Activated naive CD4-positive, alpha-beta T cell treated with anti-CD3 and anti-CD28 coated beads for 36 hours (primary cell): ENCODE measurements at regions of chr5 and their contacts with region 1.

Region 1: DNA sequence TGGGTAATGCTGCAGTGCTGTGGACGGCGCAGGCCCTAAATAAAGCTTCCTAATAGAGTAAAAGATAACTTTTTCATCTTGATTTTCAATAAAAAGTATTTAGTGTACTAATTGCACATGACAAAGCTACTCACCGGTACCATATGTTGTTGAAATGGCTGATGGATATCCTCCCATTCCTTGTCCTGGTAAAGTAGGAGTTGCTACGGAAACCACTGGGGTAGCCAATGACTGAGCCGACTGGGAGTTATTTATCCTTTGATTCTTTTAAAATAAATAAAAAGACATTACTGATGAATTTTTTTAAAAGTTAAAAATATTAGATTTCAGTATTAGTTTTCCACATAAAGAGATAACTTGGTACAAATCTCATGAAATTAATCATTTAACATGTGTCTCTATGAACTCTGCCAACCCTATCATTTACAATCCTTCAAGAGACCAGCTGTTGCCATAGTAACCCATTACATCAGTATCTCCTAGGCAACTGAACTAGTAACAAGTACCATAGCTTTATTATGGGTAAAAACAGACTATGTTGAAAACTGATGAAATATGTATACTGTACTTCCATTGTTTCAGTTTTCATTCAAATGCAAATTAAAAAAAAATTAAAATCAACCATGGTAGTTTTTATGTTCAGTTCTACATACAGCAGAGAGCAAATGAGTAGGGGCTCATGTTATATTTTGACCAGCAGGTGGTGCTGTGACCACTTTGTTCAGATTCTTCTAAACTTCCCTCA is 153.7 kb downstream of the MEF2C start:
- DNase-seq: peak; percentile 76
- H3K4me3 Mint-ChIP-seq: no peak overlapping the region
- H3K27ac Mint-ChIP-seq: no peak overlapping the region
- H3K4me1 Mint-ChIP-seq: peaks cover 4% of the 10 kb centered on the region
- H3K27me3 Mint-ChIP-seq: peaks cover 9% of the 10 kb centered on the region

Region 2: GRCh38 chr5:88690409-88691229 is 38.6 kb before region 1 on chr5:
- CTCF ChIA-PET with region 1: interaction called, 12 read pairs
- intact Hi-C with region 1: no loop called
- DNase-seq: peak; percentile 77
- H3K4me3 Mint-ChIP-seq: peak overlapping the region; percentile 65
- H3K27ac Mint-ChIP-seq: peak overlapping the region; percentile 81
- H3K4me1 Mint-ChIP-seq: peaks cover 28% of the 10 kb centered on the region
- H3K27me3 Mint-ChIP-seq: peaks cover 84% of the 10 kb centered on the region

Region 3: DNA sequence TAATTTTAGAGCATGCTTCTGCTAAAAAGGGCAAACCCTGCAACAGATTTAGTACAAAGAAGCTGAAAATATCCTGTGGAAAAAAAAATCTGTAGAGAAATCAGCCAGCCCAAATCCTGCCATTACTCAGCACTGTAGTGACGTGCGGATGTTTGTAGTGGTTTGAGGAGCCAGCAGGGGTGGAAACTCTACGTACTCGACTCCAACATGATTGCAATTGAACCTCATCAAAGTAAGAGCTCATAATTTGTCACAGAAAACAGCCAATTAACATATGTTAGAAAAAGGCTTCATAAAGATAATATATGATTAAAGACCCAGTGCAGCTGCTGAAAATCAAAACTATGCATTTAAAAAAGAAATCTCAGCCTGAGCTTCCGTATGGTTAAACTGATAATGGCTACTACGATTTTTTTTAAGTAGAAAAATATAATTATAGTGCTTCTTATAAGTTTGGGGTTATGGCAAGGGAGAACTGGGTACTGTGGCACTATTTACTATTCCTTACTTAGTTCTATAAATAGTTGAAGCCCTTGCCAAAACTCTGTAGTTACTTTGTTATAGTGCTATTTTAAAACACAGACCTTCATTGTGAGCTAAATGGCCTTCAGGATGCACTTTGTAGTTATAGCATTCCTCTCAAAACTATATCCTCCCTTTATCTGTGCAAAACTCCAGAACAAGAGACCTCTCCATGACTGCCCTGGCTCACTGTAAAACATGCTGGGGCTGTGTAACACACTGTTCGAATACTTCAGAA is 104.3 kb after region 1 on chr5:
- CTCF ChIA-PET with region 1: interaction called, 8 read pairs
- intact Hi-C with region 1: loop called (anchors 5 kb)
- DNase-seq: peak; percentile 78
- H3K4me3 Mint-ChIP-seq: no peak overlapping the region
- H3K27ac Mint-ChIP-seq: no peak overlapping the region
- H3K4me1 Mint-ChIP-seq: peaks cover 23% of the 10 kb centered on the region
- H3K27me3 Mint-ChIP-seq: peaks cover 16% of the 10 kb centered on the region

Region 4: GRCh38 chr5:88979244-88979643 is 250.0 kb after region 1 on chr5:
- CTCF ChIA-PET with region 1: interaction called, 10 read pairs
- intact Hi-C with region 1: no loop called
- DNase-seq: peak; percentile 12
- H3K4me3 Mint-ChIP-seq: no peak overlapping the region
- H3K27ac Mint-ChIP-seq: no peak overlapping the region
- H3K4me1 Mint-ChIP-seq: peaks cover 4% of the 10 kb centered on the region
- H3K27me3 Mint-ChIP-seq: peaks cover 2% of the 10 kb centered on the region

Region 5: DNA sequence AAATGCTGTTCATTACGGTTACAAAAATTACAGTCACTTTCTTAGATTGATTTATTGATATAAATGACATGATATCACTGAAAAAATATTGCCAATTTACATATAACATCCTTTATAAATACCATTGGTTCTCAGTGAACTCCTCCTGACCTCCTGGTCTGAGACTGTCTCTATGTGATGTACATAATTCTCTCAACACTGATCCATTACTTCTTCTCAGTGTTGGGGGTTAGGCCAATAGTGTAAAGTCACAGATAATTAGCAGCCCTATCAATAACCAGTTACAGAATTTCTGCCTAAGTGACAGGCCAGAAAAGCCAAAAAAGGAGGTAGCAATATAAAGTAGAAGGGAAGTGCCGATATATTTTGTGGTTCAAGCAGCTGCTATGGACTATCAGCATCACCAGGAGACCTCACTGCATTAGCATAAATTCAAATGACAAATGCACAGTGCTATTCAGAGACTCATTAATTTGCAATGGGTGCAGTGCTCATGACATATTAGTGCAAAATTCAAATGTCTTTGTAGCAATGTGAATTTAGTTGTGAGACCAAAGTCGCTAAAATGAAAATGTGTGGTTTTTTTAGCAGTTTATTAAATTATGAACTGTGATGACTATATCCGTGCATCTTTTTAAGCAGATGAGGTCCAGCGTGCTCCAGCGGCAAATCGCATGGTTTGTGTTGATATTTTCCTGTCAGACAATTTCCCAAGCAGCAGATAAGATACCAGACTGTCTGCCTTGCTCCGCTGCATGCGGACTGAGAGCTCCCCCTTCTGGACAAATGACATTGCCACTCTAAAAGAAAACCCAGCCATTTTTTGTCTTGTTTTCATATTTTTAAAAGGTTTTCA is 1535.7 kb after region 1 on chr5:
- CTCF ChIA-PET with region 1: interaction called, 15 read pairs
- intact Hi-C with region 1: loop called (anchors 1 kb)
- DNase-seq: peak; percentile 73
- H3K4me3 Mint-ChIP-seq: no peak overlapping the region
- H3K27ac Mint-ChIP-seq: no peak overlapping the region
- H3K4me1 Mint-ChIP-seq: peaks cover 2% of the 10 kb centered on the region
- H3K27me3 Mint-ChIP-seq: peaks cover 7% of the 10 kb centered on the region

Region 6: DNA sequence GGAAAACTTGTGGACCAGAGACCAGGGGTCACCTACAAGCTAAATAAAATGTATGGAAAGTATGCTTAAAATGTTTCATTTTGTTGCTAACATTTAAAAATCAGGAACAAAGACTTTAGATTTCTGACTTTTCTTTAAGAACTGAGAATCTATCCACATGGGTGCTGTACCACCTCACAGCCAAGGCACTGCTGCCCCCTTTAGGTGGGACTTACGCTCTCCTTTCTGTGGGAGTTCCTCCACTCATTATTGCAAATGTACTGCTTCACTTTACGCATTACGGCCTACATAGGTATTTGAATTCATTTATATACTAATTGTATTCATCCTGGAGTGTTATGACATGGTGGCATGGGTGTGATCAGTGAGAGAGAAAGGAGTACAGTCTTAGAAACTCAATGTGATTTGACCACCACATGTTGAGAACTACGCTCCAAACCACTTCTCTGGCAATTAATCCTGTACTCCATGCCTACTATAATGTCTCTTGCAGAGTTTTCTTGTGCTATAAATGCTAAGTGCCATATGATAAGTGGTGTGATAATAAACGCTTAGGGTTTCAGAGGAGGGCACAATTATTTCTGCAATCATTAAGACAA is 1705.0 kb after region 1 on chr5:
- CTCF ChIA-PET with region 1: no interaction called
- intact Hi-C with region 1: loop called (anchors 2 kb)
- DNase-seq: peak; percentile 65
- H3K4me3 Mint-ChIP-seq: no peak overlapping the region
- H3K27ac Mint-ChIP-seq: no peak overlapping the region
- H3K4me1 Mint-ChIP-seq: no peaks in the 10 kb centered on the region
- H3K27me3 Mint-ChIP-seq: peaks cover 5% of the 10 kb centered on the region